HCT116 (cell line): ENCODE measurements at regions of chr15 and their contacts with region 1.

Region 1: GRCh38 chr15:77543159-77543882 is 89.4 kb downstream of the LINGO1 start:
- DNase-seq: peak; percentile 78
- ATAC-seq: peak; percentile 91
- H3K4me3 ChIP-seq: peak overlapping the region; percentile 73 to 76
- H3K27ac ChIP-seq: peak overlapping the region; percentile 41
- H3K4me1 ChIP-seq: peaks cover 0 to 35% of the 10 kb centered on the region in 2 experiments; a peak in 3 of 4 replicates
- H3K27me3 ChIP-seq: no peaks in the 10 kb centered on the region
- CTCF ChIP-seq: peak; percentile 94 to 99 (median 99)
- POLR2A ChIP-seq: peak; percentile 66
- RAD21 ChIP-seq: peak; percentile 90

Region 2: DNA sequence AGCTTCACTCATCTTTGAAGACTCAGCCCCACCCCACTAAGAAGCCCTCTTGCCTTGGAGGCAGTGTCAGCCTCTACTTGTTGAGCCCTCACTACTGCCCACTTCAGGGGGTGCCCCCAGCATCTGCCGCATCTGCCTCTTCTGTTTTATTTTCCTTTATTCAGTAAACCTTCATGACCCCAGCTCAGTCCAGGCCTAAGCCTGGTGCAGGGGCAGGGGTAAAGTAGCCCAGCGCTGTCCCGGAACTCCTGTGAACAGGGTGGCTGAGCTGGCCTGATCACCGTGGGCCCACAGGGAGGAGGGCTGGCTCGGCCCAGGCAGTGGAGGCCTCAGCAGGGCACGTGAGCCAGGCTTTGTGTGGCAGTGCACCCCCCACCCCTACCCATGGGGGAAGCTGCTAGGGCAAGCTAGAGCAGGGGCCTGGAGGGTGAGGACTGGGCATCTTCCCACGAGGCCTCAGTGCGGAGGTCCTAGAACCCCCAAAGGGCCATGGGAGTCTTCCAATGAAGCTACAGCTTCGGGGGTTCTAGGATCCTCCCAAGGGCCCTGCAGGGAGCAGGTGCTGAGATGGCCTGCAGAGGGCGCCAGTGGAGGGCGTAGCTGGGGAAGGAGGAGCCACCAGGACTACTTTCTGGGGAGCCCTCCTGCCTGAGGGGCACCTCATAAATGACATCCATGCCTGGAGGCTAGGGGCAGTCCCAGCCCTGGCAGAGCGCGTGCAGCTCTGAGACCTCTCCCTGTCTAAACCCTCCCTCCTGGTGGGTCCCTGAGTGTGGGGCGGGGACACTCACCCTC is 508.4 kb before region 1 on chr15:
- CTCF ChIA-PET with region 1: interaction called, 10 read pairs
- POLR2A ChIA-PET with region 1: no interaction called
- RAD21 ChIA-PET with region 1: interaction called in 1 of 2 experiments, 4 read pairs
- intact Hi-C with region 1: no loop called
- DNase-seq: no peak
- ATAC-seq: peak; percentile 71
- H3K4me3 ChIP-seq: no peak overlapping the region
- H3K27ac ChIP-seq: no peak overlapping the region
- H3K4me1 ChIP-seq: no peaks in the 10 kb centered on the region; a peak in 1 of 4 replicates
- H3K27me3 ChIP-seq: no peaks in the 10 kb centered on the region
- CTCF ChIP-seq: peak; percentile 42 to 91 (median 89); a peak in 5 of 6 replicates
- POLR2A ChIP-seq: no peak
- RAD21 ChIP-seq: no peak; the same call in none of the 2 replicates

Region 3: DNA sequence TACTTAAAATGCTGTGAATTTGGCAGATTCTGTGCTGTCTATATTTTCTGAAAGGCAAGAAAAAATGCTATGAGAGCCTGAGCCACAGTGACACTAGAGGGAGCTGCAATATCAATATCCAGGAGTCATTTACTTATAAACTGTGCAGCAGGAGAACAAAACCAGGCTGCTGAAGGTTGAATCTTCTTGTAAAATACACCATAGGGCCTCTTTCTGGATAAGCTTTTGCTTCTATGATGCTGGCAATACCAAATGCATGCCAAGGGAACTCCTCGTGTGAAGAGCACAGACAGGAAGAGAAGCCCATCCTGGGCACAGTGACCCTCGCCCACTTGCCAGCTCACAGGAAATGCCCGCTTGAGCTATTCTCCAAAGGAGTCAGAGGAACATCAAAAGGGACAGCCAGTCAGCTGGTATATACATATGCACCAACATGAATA is 424.4 kb before region 1 on chr15:
- CTCF ChIA-PET with region 1: interaction called, 47 read pairs
- POLR2A ChIA-PET with region 1: interaction called, 3 read pairs
- RAD21 ChIA-PET with region 1: interaction called, 5 to 6 read pairs
- intact Hi-C with region 1: loop called (anchors 1 kb)
- DNase-seq: peak; percentile 36
- ATAC-seq: peak; percentile 83
- H3K4me3 ChIP-seq: no peak overlapping the region
- H3K27ac ChIP-seq: no peak overlapping the region
- H3K4me1 ChIP-seq: 0 out of 4 replicates have a peak, but pooled peaks cover 0 to 3% of the 10 kb centered on the region in 2 experiments
- H3K27me3 ChIP-seq: no peaks in the 10 kb centered on the region
- CTCF ChIP-seq: peak; percentile 72 to 77 (median 75)
- POLR2A ChIP-seq: no peak
- RAD21 ChIP-seq: peak; percentile 81

Region 4: GRCh38 chr15:77496710-77497103 is 46.6 kb before region 1 on chr15:
- CTCF ChIA-PET with region 1: interaction called, 14 read pairs
- POLR2A ChIA-PET with region 1: no interaction called
- RAD21 ChIA-PET with region 1: interaction called, 4 to 5 read pairs
- intact Hi-C with region 1: no loop called
- DNase-seq: peak; percentile 26
- ATAC-seq: peak; percentile 98
- H3K4me3 ChIP-seq: no peak overlapping the region
- H3K27ac ChIP-seq: no peak overlapping the region
- H3K4me1 ChIP-seq: peaks cover 0 to 6% of the 10 kb centered on the region in 2 experiments; a peak in 3 of 4 replicates
- H3K27me3 ChIP-seq: no peaks in the 10 kb centered on the region
- CTCF ChIP-seq: peak; percentile 76 to 96 (median 92)
- POLR2A ChIP-seq: no peak
- RAD21 ChIP-seq: peak; percentile 91

Region 5: DNA sequence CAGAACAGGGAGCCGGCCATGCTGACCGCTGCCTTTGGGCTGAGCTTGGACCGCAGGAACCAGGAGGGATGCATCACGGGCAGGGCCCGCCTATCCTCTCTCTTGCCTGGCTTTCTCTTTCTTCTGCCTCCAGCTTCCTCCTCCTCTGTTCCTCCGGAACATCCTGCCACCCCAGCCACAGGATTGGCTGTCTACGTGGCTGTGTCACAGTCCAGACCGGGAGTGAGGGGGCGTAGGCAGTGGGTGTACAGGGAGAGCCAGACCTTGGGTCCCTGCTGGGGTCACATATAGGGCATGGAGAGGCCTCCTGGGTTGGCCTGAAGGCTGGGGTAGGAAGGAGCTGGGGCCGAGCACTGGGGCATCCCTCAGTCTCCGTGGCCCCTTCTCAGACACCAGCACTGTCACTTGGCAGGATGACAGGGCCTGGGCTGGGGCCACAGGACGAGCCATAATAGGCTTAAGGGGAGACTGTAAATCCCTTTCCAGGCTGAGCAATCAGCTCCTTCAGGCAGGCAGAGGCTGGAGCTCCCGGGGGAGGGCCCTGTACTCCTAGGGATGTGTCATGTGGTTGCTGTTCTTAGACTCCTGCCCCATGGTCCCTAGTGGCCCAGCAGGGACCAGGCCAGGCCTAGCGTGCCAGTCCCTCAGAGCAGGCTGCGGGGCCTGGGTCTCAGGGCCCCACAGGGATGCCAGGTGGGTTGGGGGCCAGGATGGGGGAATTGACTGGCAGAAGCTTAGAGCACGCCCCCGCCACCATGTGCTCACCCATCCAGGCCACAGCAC is 64.0 kb after region 1 on chr15:
- CTCF ChIA-PET with region 1: interaction called, 10 read pairs
- POLR2A ChIA-PET with region 1: no interaction called
- RAD21 ChIA-PET with region 1: no interaction called
- intact Hi-C with region 1: no loop called
- DNase-seq: no peak
- ATAC-seq: peak; percentile 26; the same call in 1 of the 2 replicates
- H3K4me3 ChIP-seq: no peak overlapping the region
- H3K27ac ChIP-seq: no peak overlapping the region
- H3K4me1 ChIP-seq: peaks cover 5 to 52% of the 10 kb centered on the region in 2 experiments; a peak in 3 of 4 replicates
- H3K27me3 ChIP-seq: no peaks in the 10 kb centered on the region
- CTCF ChIP-seq: no peak
- POLR2A ChIP-seq: no peak
- RAD21 ChIP-seq: no peak

Region 6: GRCh38 chr15:77633134-77633912 is 90.0 kb after region 1 on chr15:
- CTCF ChIA-PET with region 1: interaction called, 11 read pairs
- POLR2A ChIA-PET with region 1: no interaction called
- RAD21 ChIA-PET with region 1: no interaction called
- intact Hi-C with region 1: no loop called
- DNase-seq: peak; percentile 74
- ATAC-seq: peak; percentile 89
- H3K4me3 ChIP-seq: peak overlapping the region; percentile 48 to 71
- H3K27ac ChIP-seq: peak overlapping the region; percentile 44; the same call in 1 of the 2 replicates
- H3K4me1 ChIP-seq: peaks cover 11 to 29% of the 10 kb centered on the region in 2 experiments; a peak in 3 of 4 replicates
- H3K27me3 ChIP-seq: no peaks in the 10 kb centered on the region
- CTCF ChIP-seq: peak; percentile 99 to 100 (median 100)
- POLR2A ChIP-seq: no peak
- RAD21 ChIP-seq: peak; percentile 92